Panc1 (cell line): ENCODE measurements at regions of chr6 and their contacts with region 1.

Region 1: DNA sequence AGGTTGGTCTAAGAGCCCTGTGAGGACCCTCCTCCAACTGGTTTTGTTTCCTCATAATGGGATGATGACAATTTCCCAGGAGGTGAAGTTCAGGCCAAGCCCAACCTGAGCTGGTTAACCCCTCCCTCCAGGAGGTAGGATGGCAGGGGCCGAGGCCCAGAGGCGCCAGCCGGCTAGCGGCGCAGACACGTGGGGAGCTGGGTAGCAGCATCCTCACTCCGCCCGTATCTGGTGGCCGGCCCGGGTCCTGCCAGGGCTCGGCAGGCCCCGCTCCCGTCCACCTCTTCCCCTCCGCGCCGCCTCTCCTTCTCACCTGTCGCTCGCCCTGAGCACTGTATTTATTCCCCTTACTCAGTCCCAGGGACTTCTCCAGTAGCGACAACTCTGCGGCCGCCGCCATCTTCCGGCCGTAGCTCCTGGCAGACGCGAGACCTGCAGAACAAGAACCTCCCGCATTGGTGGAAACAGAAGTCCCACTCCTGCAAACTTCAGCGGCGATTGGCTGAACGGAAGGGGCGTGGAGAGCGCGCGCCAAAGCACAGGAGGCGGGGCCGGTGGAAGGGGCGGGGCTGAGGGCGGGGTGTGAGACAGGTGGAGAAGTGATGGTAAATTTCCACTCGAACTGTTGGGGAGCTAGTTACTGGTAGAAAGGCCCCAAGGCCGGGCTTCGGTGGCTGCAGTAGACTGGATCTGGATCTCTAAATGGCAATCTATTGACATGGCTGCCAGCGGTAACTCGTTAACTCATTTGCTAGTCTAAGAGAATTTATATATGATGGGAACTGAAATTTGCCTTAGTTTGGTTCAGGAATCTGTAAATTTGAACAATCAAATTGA is at the start of gene EEF1E1:
- DNase-seq: no peak
- ATAC-seq: peak; percentile 99
- H3K4me3 ChIP-seq: peak within 1 kb of the TSS; percentile 68 to 99
- H3K27ac ChIP-seq: peak within 1 kb of the TSS; percentile 89
- H3K4me1 ChIP-seq: peaks cover 20% of the 10 kb centered on the region
- H3K27me3 ChIP-seq: no peaks in the 10 kb centered on the region
- CTCF ChIP-seq: no peak
- total RNA-seq, gene EEF1E1: 59.5 TPM

Region 2: DNA sequence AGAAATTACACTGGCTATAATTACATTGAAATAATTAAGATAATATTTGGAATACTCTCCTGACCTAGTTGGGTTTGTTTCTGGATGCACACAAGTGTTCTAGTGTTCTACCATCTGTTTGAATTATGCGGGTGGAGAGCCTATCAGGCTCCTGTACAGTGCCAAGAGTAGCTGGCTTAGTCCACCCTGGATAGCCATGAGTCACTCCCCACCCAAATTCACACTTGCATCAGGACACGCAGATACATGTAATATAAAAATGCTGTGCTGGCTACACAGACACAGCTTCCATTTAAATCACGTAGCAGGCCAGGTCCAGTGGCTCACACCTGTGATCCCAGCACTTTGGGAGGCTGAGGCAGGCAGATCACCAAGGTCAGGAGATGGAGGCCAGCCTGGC is 1019.2 kb after region 1 on chr6:
- CTCF ChIA-PET with region 1: no interaction called
- POLR2A ChIA-PET with region 1: interaction called, 10 read pairs
- in situ Hi-C with region 1: no loop called
- intact Hi-C with region 1: no loop called
- DNase-seq: no peak
- ATAC-seq: no peak
- H3K4me3 ChIP-seq: no peak overlapping the region
- H3K27ac ChIP-seq: no peak overlapping the region
- H3K4me1 ChIP-seq: no peaks in the 10 kb centered on the region
- H3K27me3 ChIP-seq: no peaks in the 10 kb centered on the region
- CTCF ChIP-seq: no peak